ENCODE measurements at regions of chr11 and their contacts with region 1.

Region 1: GRCh38 chr11:108620958-108621772 is 27.6 kb upstream of the EXPH5 start:
- DNase-seq: peak; percentile 95
- ATAC-seq: peak; percentile 61
- H3K4me3 ChIP-seq: peak overlapping the region; percentile 31; the same call in 1 of the 2 replicates
- H3K27ac ChIP-seq: peak overlapping the region; percentile 88
- H3K4me1 ChIP-seq: peaks cover 60% of the 10 kb centered on the region
- H3K27me3 ChIP-seq: no peaks in the 10 kb centered on the region
- CTCF ChIP-seq: no peak

Region 2: DNA sequence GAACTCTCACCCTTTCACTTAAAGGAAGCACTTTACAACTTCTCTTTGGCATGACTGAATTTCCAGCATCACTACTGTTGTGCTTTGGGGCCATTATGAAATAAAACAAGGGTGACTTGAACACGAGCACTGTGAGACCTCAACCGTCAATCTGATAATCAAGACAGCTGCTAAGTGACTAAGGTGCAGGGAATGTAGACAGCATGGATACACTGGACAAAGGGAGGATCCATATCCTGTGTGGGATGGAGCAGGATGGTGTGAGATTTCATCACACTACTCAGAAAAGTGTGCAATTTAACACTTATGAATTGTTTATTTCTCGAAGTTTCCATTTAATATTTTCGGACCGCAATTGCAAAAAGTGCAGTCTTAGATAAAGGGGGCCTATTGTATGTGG is 11.5 kb before region 1 on chr11:
- CTCF ChIA-PET with region 1: no interaction called
- POLR2A ChIA-PET with region 1: no interaction called
- intact Hi-C with region 1: loop called (anchors 1 kb)
- DNase-seq: peak; percentile 66
- ATAC-seq: no peak
- H3K4me3 ChIP-seq: no peak overlapping the region
- H3K27ac ChIP-seq: no peak overlapping the region
- H3K4me1 ChIP-seq: peaks cover 33% of the 10 kb centered on the region
- H3K27me3 ChIP-seq: no peaks in the 10 kb centered on the region
- CTCF ChIP-seq: no peak

Region 3: GRCh38 chr11:108639146-108639545 is 18.0 kb after region 1 on chr11:
- CTCF ChIA-PET with region 1: no interaction called
- POLR2A ChIA-PET with region 1: no interaction called
- intact Hi-C with region 1: no loop called
- DNase-seq: no peak
- ATAC-seq: no peak
- H3K4me3 ChIP-seq: no peak overlapping the region
- H3K27ac ChIP-seq: no peak overlapping the region
- H3K4me1 ChIP-seq: peaks cover 17% of the 10 kb centered on the region
- H3K27me3 ChIP-seq: no peaks in the 10 kb centered on the region
- CTCF ChIP-seq: no peak

Region 4: DNA sequence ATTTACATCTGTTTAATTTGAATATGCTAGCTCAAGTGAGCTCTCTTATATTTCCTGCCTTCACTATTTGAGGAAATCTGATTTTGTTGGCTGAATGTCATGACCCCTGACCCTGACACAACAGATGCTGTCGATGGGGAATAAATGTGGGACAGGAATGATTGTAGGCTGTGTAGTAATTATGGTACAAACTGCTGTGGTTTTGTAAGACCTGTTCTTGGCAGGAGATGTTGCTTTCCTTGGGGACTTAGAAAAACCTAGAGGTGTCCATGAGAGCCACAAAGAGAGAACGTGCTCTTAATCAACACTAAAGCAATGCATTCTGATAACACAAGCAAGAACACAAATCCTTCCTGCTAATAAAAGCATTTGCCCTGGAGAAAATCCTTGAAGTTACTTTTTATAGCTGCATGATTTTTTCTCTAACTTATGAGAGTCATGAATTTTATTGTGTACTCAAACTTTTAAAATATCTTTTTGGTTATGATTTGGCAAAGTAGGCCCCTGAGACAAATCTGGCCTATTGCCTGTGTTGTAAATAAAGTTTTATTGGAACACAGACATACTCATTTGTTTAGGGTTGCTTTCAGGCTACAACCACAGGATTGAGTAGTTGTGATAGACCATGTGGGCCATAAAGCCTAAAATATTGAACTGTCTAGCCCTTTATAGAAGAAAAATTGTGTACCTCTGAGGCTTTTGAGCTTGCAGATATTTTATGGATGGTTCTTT is 133.9 kb after region 1 on chr11:
- CTCF ChIA-PET with region 1: no interaction called
- POLR2A ChIA-PET with region 1: no interaction called
- intact Hi-C with region 1: no loop called
- DNase-seq: peak; percentile 29
- ATAC-seq: peak; percentile 49
- H3K4me3 ChIP-seq: no peak overlapping the region
- H3K27ac ChIP-seq: no peak overlapping the region
- H3K4me1 ChIP-seq: peaks cover 21% of the 10 kb centered on the region; the same call in 1 of the 2 replicates
- H3K27me3 ChIP-seq: no peaks in the 10 kb centered on the region
- CTCF ChIP-seq: no peak